Cardiac septum (tissue), 1 donor: ENCODE measurements at regions of chr2 and their contacts with region 1.

Region 1: DNA sequence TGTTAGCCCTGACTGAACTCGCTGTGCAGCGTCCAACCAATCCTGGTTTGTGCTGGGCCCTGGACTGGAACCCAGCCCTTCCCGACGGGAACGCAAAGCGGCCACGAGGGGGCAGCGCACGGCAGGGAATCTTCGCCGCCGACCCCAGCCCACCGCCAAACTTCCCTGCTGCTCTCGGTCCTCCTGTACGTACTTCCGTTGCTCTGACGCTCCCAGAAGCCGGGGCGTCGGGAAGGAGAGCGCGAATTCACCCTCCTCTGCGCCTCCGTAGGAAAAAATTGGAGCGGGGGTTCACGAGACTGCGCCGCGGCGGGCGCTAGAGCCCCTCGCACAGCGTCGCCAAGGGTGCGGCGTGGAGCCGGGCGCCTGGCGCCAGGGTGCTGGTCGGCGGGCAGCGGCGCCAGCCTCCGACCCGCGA is 948 bp upstream of the SH3RF3 start:
- DNase-seq: peak; percentile 93

Region 2: DNA sequence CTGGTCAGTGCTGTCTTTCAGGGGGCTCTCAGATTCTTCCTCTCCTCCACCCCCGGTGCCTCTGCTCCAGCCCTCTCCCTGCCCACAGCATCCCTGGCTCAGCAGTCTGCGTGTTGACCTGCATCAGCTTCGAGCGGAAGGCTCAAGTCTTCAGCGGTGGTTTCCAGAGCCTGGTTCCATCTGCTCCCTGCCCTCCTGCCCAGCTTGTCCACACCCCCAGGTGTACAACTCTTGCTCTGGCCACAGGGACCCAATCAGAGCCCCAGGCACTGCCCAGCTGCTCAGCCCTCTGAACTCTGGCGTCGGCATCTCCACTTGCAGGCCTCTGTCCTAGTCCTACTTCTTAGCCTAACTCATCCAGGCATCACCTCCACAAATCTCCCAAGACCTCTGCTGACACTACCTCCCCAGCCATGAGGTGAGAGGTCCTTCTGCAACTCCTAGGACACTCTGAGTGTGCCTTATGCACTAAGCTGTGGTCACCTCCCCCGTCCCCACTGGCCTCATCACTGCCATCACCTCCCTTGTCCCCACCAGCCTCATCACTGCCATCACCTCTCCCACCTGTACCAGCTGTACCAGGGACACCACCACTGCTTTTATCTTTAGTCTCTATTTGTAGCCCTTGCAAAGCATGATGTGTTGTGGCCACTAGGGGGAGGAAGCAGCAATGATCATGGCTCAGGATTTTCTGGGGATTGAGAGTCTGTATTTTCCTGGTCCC is 200.0 kb before region 1 on chr2:
- intact Hi-C with region 1: no loop called
- DNase-seq: peak; percentile 62

Region 3: GRCh38 chr2:109185821-109186570 is 57.9 kb after region 1 on chr2:
- intact Hi-C with region 1: loop called (anchors 5 kb)
- DNase-seq: no peak

Region 4: GRCh38 chr2:109284826-109285225 is 156.8 kb after region 1 on chr2:
- intact Hi-C with region 1: loop called (anchors 5 kb)
- DNase-seq: no peak

Region 5: DNA sequence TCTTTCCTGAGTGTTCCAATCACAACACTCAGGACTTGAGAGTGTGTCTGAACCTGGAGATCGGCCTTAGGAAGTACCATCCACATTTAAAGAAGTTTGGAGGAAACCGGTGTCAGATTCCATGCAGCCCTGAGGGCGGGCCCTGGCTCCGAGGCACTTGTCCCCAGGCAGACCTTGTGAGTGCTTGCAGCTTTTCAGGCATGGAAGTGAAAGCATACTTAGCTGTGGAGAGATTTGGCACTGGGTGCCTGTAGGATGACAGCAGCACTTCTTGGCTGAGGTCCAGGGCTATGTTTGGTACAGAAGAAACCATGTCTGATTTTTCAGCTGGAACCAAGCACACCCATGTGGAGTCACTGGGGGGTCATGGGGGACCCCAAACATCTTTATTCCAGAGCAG is 254.9 kb after region 1 on chr2:
- intact Hi-C with region 1: loop called (anchors 5 kb)
- DNase-seq: peak; percentile 80

Region 6: GRCh38 chr2:109510136-109511028 is 382.3 kb after region 1 on chr2:
- intact Hi-C with region 1: loop called (anchors 1 kb)
- DNase-seq: peak; percentile 83